Uterus (tissue), 4 donors: ENCODE measurements at regions of chr22 and their contacts with region 1.

Region 1: GRCh38 chr22:35627264-35628041 is 10.3 kb upstream of the MB start:
- DNase-seq: peak; percentile 82 to 89
- H3K4me3 ChIP-seq: peak overlapping the region; percentile 58 to 66
- H3K27ac ChIP-seq: peak overlapping the region; percentile 91 to 94
- H3K4me1 ChIP-seq: peaks cover 0 to 7% of the 10 kb centered on the region in 2 donors
- H3K27me3 ChIP-seq: no peaks in the 10 kb centered on the region
- CTCF ChIP-seq: peak; percentile 54 to 76 (median 66)
- POLR2A ChIP-seq: peak in 1 of 2 donors; percentile 58

Region 2: GRCh38 chr22:35840302-35840739 is 212.9 kb after region 1 on chr22:
- intact Hi-C with region 1: loop called (anchors 10 kb)
- DNase-seq: peak; percentile 90 to 94
- H3K4me3 ChIP-seq: peak overlapping the region; percentile 49
- H3K27ac ChIP-seq: peak overlapping the region; percentile 87 to 93
- H3K4me1 ChIP-seq: peaks cover 0 to 18% of the 10 kb centered on the region in 2 donors
- H3K27me3 ChIP-seq: no peaks in the 10 kb centered on the region
- CTCF ChIP-seq: no peak
- POLR2A ChIP-seq: peak in 1 of 2 donors; percentile 31

Region 3: DNA sequence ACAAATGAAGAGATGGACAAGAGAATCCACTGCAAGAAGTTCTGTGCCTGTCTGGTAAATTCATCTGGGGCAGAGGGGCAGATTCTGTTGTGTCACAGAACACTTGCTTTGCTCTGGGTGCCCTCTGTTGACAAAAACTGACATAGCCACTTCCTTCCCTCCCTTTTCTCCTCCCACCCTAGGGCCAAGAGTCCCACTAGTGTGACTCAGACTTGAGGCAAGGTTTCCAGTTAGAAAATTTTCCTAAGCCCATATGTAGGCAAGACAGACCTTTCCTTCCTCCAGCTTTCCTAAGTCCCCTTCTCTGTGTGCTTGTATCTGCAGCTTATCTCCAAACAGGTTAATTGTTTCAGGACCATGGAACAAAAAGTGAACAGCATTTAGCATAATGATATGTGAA is 294.3 kb after region 1 on chr22:
- intact Hi-C with region 1: loop called (anchors 10 kb)
- DNase-seq: peak; percentile 60 to 81
- H3K4me3 ChIP-seq: no peak overlapping the region
- H3K27ac ChIP-seq: peak overlapping the region; percentile 61 to 65
- H3K4me1 ChIP-seq: peaks cover 0 to 7% of the 10 kb centered on the region in 2 donors
- H3K27me3 ChIP-seq: no peaks in the 10 kb centered on the region
- CTCF ChIP-seq: peak; percentile 49 to 77 (median 63)
- POLR2A ChIP-seq: no peak